ENCODE measurements at regions of chr3 and their contacts with region 1.

Region 1: GRCh38 chr3:196502775-196503195 is 783 bp downstream of the RNF168 start:
- DNase-seq: peak; percentile 28
- ATAC-seq: peak; percentile 13
- H3K4me3 Mint-ChIP-seq: peak overlapping the region; percentile 98
- H3K27ac Mint-ChIP-seq: peak overlapping the region; percentile 90
- H3K4me1 Mint-ChIP-seq: peaks cover 38% of the 10 kb centered on the region
- H3K27me3 Mint-ChIP-seq: no peaks in the 10 kb centered on the region
- CTCF ChIP-seq: no peak

Region 2: GRCh38 chr3:196251918-196252317 is 250.9 kb before region 1 on chr3:
- CTCF ChIA-PET with region 1: no interaction called
- POLR2A ChIA-PET with region 1: no interaction called
- intact Hi-C with region 1: loop called (anchors 1 kb)
- DNase-seq: no peak
- ATAC-seq: peak; percentile 70
- H3K4me3 Mint-ChIP-seq: no peak overlapping the region
- H3K27ac Mint-ChIP-seq: no peak overlapping the region
- H3K4me1 Mint-ChIP-seq: peaks cover 8% of the 10 kb centered on the region
- H3K27me3 Mint-ChIP-seq: no peaks in the 10 kb centered on the region
- CTCF ChIP-seq: no peak

Region 3: GRCh38 chr3:196365736-196366135 is 137.0 kb before region 1 on chr3:
- CTCF ChIA-PET with region 1: no interaction called
- POLR2A ChIA-PET with region 1: interaction called, 13 read pairs
- intact Hi-C with region 1: no loop called
- DNase-seq: no peak
- ATAC-seq: no peak
- H3K4me3 Mint-ChIP-seq: no peak overlapping the region
- H3K27ac Mint-ChIP-seq: no peak overlapping the region
- H3K4me1 Mint-ChIP-seq: no peaks in the 10 kb centered on the region
- H3K27me3 Mint-ChIP-seq: no peaks in the 10 kb centered on the region
- CTCF ChIP-seq: no peak

Region 4: DNA sequence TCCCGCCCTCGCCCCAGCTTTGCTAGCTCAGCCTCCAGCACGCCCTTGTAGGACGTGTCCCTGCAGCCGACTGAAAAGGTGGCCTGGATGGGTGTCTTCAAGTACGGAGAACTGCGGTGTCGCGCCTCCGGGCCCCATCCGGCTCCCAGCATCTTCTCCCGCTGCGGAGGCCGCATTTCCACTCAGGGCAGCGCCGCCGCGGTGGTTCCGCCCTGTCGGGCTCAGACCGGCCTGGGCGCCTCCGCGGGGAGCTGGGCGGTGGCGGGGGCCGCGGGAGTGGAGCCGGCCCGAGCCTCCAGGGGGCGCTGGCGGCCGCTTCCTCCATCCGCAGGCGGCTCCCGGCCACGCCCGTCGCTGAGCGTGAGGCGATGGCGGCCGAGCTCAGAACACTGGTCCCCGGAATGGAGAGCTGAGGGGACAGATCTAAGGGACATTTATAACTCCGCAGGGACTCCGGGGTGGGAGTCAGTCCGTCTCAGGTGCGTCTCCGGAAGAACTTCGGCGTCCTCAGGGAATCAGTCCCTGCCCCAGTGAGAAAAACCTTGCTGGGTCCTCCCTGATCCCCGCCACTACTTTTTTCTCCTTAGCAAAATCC is 26.0 kb after region 1 on chr3:
- CTCF ChIA-PET with region 1: interaction called, 11 read pairs
- POLR2A ChIA-PET with region 1: interaction called, 14 read pairs
- intact Hi-C with region 1: loop called (anchors 1 kb)
- DNase-seq: peak; percentile 92
- ATAC-seq: peak; percentile 97
- H3K4me3 Mint-ChIP-seq: peak overlapping the region; percentile 77
- H3K27ac Mint-ChIP-seq: peak overlapping the region; percentile 68
- H3K4me1 Mint-ChIP-seq: peaks cover 9% of the 10 kb centered on the region
- H3K27me3 Mint-ChIP-seq: no peaks in the 10 kb centered on the region
- CTCF ChIP-seq: no peak

Region 5: GRCh38 chr3:196632046-196632751 is 129.4 kb after region 1 on chr3:
- CTCF ChIA-PET with region 1: no interaction called
- POLR2A ChIA-PET with region 1: no interaction called
- intact Hi-C with region 1: loop called (anchors 5 kb)
- DNase-seq: peak; percentile 77
- ATAC-seq: peak; percentile 75
- H3K4me3 Mint-ChIP-seq: peak overlapping the region; percentile 93
- H3K27ac Mint-ChIP-seq: peak overlapping the region; percentile 96
- H3K4me1 Mint-ChIP-seq: peaks cover 66% of the 10 kb centered on the region
- H3K27me3 Mint-ChIP-seq: no peaks in the 10 kb centered on the region
- CTCF ChIP-seq: no peak

Region 6: DNA sequence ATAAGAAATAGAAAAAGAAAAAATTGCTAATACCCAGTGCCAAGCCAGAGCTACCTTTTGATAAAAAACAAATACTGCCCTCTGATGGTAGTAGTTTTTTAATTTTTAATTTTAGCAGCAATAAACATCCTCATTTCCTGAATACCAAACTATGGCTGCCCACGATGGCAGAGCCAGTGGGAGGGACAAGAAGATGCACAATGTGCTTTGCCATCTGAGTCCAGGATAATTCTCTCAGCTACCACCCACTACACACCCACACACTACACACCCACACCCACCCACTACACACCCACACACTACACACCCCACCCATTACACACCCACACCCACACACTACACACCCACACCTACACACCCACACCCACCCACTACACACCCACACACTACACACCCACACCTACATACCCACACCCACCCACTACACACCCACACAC is 191.4 kb after region 1 on chr3:
- CTCF ChIA-PET with region 1: no interaction called
- POLR2A ChIA-PET with region 1: interaction called, 17 read pairs
- intact Hi-C with region 1: no loop called
- DNase-seq: no peak
- ATAC-seq: peak; percentile 35
- H3K4me3 Mint-ChIP-seq: no peak overlapping the region
- H3K27ac Mint-ChIP-seq: no peak overlapping the region
- H3K4me1 Mint-ChIP-seq: peaks cover 17% of the 10 kb centered on the region
- H3K27me3 Mint-ChIP-seq: no peaks in the 10 kb centered on the region
- CTCF ChIP-seq: no peak

Region 7: GRCh38 chr3:196739671-196740480 is 237.1 kb after region 1 on chr3 and contains the start of gene PAK2:
- CTCF ChIA-PET with region 1: no interaction called
- POLR2A ChIA-PET with region 1: interaction called, 4 read pairs
- intact Hi-C with region 1: loop called (anchors 2 kb)
- DNase-seq: peak; percentile 86
- ATAC-seq: peak; percentile 92
- H3K4me3 Mint-ChIP-seq: peak within 1 kb of the TSS; percentile 100
- H3K27ac Mint-ChIP-seq: peak within 1 kb of the TSS; percentile 99
- H3K4me1 Mint-ChIP-seq: peaks cover 33% of the 10 kb centered on the region
- H3K27me3 Mint-ChIP-seq: no peaks in the 10 kb centered on the region
- CTCF ChIP-seq: no peak
- total RNA-seq, gene PAK2: 73.7 and 87.1 TPM in 2 replicates

Measured in activated B cell treated with CpG ODN at 0.5 μM for 24 hours (primary cell).